ENCODE measurements at regions of chr16 and their contacts with region 1.

Region 1: GRCh38 chr16:72124761-72125634 is 31.4 kb downstream of the DHX38 start:
- DNase-seq: peak; percentile 68
- H3K4me3 Mint-ChIP-seq: no peak overlapping the region
- H3K27ac Mint-ChIP-seq: no peak overlapping the region
- H3K4me1 Mint-ChIP-seq: no peaks in the 10 kb centered on the region
- H3K27me3 Mint-ChIP-seq: peaks cover 4% of the 10 kb centered on the region

Region 2: GRCh38 chr16:72467157-72467759 is 342.3 kb after region 1 on chr16:
- CTCF ChIA-PET with region 1: interaction called, 18 read pairs
- POLR2A ChIA-PET with region 1: no interaction called
- DNase-seq: no peak
- H3K4me3 Mint-ChIP-seq: no peak overlapping the region
- H3K27ac Mint-ChIP-seq: no peak overlapping the region
- H3K4me1 Mint-ChIP-seq: peaks cover 4% of the 10 kb centered on the region
- H3K27me3 Mint-ChIP-seq: no peaks in the 10 kb centered on the region